ENCODE measurements at regions of chr14 and their contacts with region 1.

Region 1: GRCh38 chr14:35687335-35687939 is 121.7 kb downstream of the RALGAPA1 start:
- DNase-seq: peak; percentile 63
- H3K4me3 Mint-ChIP-seq: no peak overlapping the region
- H3K27ac Mint-ChIP-seq: no peak overlapping the region
- H3K4me1 Mint-ChIP-seq: peaks cover 16% of the 10 kb centered on the region
- H3K27me3 Mint-ChIP-seq: no peaks in the 10 kb centered on the region

Region 2: DNA sequence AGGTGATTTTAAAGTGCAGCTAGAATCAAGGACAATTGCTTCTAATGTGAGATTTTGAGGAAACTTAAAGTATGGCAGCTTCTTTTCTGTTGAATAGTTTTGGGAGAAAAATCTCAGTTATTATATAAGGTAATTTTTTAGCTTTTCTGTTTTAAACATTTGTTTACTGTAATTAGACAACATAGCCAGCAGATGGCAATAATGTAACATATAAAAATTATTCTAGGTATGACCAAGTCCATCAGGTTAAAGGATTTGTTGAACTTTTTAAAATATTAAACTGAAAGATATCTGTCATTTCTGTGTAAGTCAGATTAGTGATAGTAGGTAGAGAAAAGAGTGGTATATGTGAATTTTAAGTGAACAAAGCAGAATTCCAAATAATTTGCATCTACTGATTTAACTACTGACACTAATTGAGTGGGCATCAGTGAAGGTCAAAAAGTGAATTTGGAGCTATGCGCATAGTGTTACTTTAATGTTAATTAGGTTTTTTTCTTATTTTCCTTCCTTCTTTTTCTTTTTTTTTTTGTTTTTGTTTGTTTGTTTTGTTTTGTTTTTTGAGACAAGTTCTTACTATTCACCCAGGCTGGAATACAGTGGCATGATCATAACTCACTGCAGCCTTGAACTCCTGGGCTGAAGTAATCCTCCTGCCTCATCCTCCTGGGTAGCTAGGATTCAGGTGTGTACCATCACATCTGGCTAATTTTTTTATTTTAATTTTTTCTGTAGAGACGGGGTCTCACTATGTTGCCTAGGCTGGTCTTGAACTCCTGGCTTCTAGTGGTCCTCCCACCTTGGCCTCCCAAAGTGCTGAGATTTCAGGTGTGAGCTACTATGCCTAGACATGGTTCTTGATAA is 546.5 kb before region 1 on chr14:
- CTCF ChIA-PET with region 1: no interaction called
- intact Hi-C with region 1: loop called (anchors 5 kb)
- DNase-seq: no peak
- H3K4me3 Mint-ChIP-seq: no peak overlapping the region
- H3K27ac Mint-ChIP-seq: no peak overlapping the region
- H3K4me1 Mint-ChIP-seq: peaks cover 8% of the 10 kb centered on the region
- H3K27me3 Mint-ChIP-seq: no peaks in the 10 kb centered on the region

Region 3: DNA sequence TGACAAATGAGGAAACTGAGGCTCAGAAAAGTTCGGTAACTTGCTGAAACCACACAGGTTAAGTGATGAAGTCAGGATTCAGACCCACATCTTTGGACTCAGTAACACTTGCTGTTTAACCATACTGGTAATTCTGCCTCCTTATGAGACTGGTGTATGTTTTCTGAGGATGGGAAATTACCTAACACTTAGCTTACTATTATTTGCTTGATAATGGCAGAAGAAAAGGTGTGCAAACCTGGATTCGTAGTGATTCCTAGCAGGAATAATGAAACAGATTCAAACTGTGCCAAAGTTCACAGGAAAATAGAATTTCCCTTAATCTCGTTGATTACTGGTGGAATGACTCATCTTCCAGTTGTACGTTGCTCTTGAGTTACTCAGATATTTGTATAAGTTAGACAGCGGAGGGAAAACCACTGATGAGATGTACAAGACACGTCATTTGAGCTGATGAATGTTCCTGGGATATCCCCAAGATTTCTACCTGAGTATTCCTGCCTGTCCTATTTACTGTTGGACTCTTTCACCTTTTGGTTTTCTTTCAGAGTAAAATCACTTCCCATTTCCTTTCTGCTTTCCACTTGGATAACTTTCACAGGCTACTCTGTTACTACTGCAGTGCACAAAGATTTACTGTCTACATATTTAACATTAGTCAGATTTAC is 527.6 kb before region 1 on chr14:
- CTCF ChIA-PET with region 1: no interaction called
- intact Hi-C with region 1: loop called (anchors 5 kb)
- DNase-seq: no peak
- H3K4me3 Mint-ChIP-seq: no peak overlapping the region
- H3K27ac Mint-ChIP-seq: peak overlapping the region; percentile 32
- H3K4me1 Mint-ChIP-seq: peaks cover 52% of the 10 kb centered on the region
- H3K27me3 Mint-ChIP-seq: no peaks in the 10 kb centered on the region

Region 4: GRCh38 chr14:35438910-35439713 is 248.3 kb before region 1 on chr14:
- CTCF ChIA-PET with region 1: interaction called, 11 read pairs
- intact Hi-C with region 1: loop called (anchors 1 kb)
- DNase-seq: no peak
- H3K4me3 Mint-ChIP-seq: no peak overlapping the region
- H3K27ac Mint-ChIP-seq: no peak overlapping the region
- H3K4me1 Mint-ChIP-seq: peaks cover 9% of the 10 kb centered on the region
- H3K27me3 Mint-ChIP-seq: no peaks in the 10 kb centered on the region

Region 5: GRCh38 chr14:35533357-35534207 is 153.9 kb before region 1 on chr14 and contains the start of gene INSM2:
- CTCF ChIA-PET with region 1: no interaction called
- intact Hi-C with region 1: loop called (anchors 1 kb)
- DNase-seq: peak; percentile 61
- H3K4me3 Mint-ChIP-seq: peak within 1 kb of the TSS; percentile 73
- H3K27ac Mint-ChIP-seq: no peak within 1 kb of the TSS
- H3K4me1 Mint-ChIP-seq: peaks cover 10% of the 10 kb centered on the region
- H3K27me3 Mint-ChIP-seq: peaks cover 61% of the 10 kb centered on the region
- total RNA-seq, gene INSM2: not detected